CD4-positive, alpha-beta T cell (primary cell): ENCODE measurements at regions of chr1 and their contacts with region 1.

Region 1: GRCh38 chr1:209747580-209748262 is 8.1 kb upstream of the TRAF3IP3 start:
- DNase-seq: peak; percentile 69 to 93 (median 78)
- ATAC-seq: peak; percentile 79
- H3K4me3 ChIP-seq: peak overlapping the region; percentile 58
- H3K4me3 Mint-ChIP-seq: peak overlapping the region; percentile 91
- H3K27ac ChIP-seq: peak overlapping the region; percentile 66
- H3K27ac Mint-ChIP-seq: peak overlapping the region; percentile 89
- H3K4me1 ChIP-seq: peaks cover 47% of the 10 kb centered on the region
- H3K4me1 Mint-ChIP-seq: peaks cover 56% of the 10 kb centered on the region
- H3K27me3 ChIP-seq: no peaks in the 10 kb centered on the region
- H3K27me3 Mint-ChIP-seq: no peaks in the 10 kb centered on the region
- CTCF ChIP-seq: peak; percentile 99

Region 2: DNA sequence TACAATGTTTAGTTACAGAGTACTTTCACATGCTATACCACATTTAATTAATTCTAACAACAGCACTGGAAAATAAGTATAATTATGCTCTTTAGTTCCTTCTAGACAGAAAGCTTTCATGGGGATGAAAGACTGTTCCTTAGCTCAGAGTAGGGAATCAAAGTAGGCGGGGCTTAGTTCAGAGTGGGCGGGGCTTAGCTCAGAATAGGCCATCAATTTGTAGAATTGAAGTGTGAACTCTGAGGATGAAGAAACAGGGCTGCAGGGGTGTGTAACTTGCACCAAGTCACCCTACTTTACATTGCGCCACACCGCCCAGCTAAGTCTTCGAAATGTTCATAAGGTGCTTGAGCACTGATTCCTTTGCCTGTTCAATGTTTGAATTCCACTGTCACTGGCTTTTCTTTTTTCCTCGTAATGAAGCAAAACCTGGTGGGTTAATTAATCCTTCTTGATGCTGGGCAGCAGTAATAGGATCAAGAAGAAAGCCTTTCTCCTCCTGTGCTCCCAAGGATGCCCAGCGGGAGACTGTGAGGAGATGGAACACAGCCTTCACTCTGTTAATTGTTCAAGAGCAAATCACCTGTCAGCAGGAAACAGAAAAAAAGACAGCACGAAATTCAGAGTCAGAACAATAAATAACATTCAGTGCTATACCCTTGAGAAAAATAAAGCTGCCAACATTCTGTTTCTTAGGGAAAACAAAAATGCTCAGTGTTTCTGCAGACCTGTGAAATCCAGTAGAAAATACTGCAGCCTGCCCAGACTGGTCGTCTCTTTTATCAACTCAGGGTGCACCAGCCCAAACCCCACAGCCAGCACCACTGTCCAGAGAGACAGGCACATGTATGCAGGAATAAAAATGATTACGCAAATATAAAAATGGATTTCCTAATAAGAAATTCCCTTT is 230.7 kb before region 1 on chr1:
- CTCF ChIA-PET with region 1: no interaction called
- POLR2A ChIA-PET with region 1: no interaction called
- intact Hi-C with region 1: no loop called
- DNase-seq: no peak
- ATAC-seq: no peak
- H3K4me3 ChIP-seq: no peak overlapping the region
- H3K4me3 Mint-ChIP-seq: no peak overlapping the region
- H3K27ac ChIP-seq: no peak overlapping the region
- H3K27ac Mint-ChIP-seq: no peak overlapping the region
- H3K4me1 ChIP-seq: no peaks in the 10 kb centered on the region
- H3K4me1 Mint-ChIP-seq: no peaks in the 10 kb centered on the region
- H3K27me3 ChIP-seq: peaks cover 4 to 9% of the 10 kb centered on the region in 2 experiments
- H3K27me3 Mint-ChIP-seq: peaks cover 24% of the 10 kb centered on the region
- CTCF ChIP-seq: no peak

Region 3: GRCh38 chr1:209565759-209566678 is 181.7 kb before region 1 on chr1:
- CTCF ChIA-PET with region 1: interaction called, 8 read pairs
- POLR2A ChIA-PET with region 1: no interaction called
- intact Hi-C with region 1: loop called in 1 of 2 experiments (anchors 2 kb)
- DNase-seq: peak; percentile 49 to 84 (median 62)
- ATAC-seq: peak; percentile 89
- H3K4me3 ChIP-seq: no peak overlapping the region
- H3K4me3 Mint-ChIP-seq: no peak overlapping the region
- H3K27ac ChIP-seq: no peak overlapping the region
- H3K27ac Mint-ChIP-seq: no peak overlapping the region
- H3K4me1 ChIP-seq: peaks cover 8% of the 10 kb centered on the region
- H3K4me1 Mint-ChIP-seq: peaks cover 12% of the 10 kb centered on the region
- H3K27me3 ChIP-seq: no peaks in the 10 kb centered on the region
- H3K27me3 Mint-ChIP-seq: peaks cover 67% of the 10 kb centered on the region
- CTCF ChIP-seq: peak; percentile 74

Region 4: GRCh38 chr1:209601809-209602657 is 145.7 kb before region 1 on chr1:
- CTCF ChIA-PET with region 1: no interaction called
- POLR2A ChIA-PET with region 1: no interaction called
- intact Hi-C with region 1: loop called (anchors 1 to 2 kb)
- DNase-seq: peak in 6 of 14 experiments; percentile 7 to 67 (median 39)
- ATAC-seq: peak; percentile 81
- H3K4me3 ChIP-seq: no peak overlapping the region
- H3K4me3 Mint-ChIP-seq: no peak overlapping the region
- H3K27ac ChIP-seq: no peak overlapping the region
- H3K27ac Mint-ChIP-seq: no peak overlapping the region
- H3K4me1 ChIP-seq: no peaks in the 10 kb centered on the region
- H3K4me1 Mint-ChIP-seq: no peaks in the 10 kb centered on the region
- H3K27me3 ChIP-seq: no peaks in the 10 kb centered on the region
- H3K27me3 Mint-ChIP-seq: peaks cover 4% of the 10 kb centered on the region
- CTCF ChIP-seq: peak; percentile 47

Region 5: GRCh38 chr1:209769171-209769904 is 21.6 kb after region 1 on chr1:
- CTCF ChIA-PET with region 1: interaction called, 80 read pairs
- POLR2A ChIA-PET with region 1: interaction called, 478 read pairs
- intact Hi-C with region 1: loop called (anchors 1 to 2 kb)
- DNase-seq: peak; percentile 31 to 91 (median 76)
- ATAC-seq: peak; percentile 77
- H3K4me3 ChIP-seq: peak overlapping the region; percentile 71
- H3K4me3 Mint-ChIP-seq: no peak overlapping the region
- H3K27ac ChIP-seq: peak overlapping the region; percentile 54 to 73
- H3K27ac Mint-ChIP-seq: no peak overlapping the region
- H3K4me1 ChIP-seq: peaks cover 77% of the 10 kb centered on the region
- H3K4me1 Mint-ChIP-seq: peaks cover 50% of the 10 kb centered on the region
- H3K27me3 ChIP-seq: no peaks in the 10 kb centered on the region
- H3K27me3 Mint-ChIP-seq: no peaks in the 10 kb centered on the region
- CTCF ChIP-seq: no peak

Region 6: DNA sequence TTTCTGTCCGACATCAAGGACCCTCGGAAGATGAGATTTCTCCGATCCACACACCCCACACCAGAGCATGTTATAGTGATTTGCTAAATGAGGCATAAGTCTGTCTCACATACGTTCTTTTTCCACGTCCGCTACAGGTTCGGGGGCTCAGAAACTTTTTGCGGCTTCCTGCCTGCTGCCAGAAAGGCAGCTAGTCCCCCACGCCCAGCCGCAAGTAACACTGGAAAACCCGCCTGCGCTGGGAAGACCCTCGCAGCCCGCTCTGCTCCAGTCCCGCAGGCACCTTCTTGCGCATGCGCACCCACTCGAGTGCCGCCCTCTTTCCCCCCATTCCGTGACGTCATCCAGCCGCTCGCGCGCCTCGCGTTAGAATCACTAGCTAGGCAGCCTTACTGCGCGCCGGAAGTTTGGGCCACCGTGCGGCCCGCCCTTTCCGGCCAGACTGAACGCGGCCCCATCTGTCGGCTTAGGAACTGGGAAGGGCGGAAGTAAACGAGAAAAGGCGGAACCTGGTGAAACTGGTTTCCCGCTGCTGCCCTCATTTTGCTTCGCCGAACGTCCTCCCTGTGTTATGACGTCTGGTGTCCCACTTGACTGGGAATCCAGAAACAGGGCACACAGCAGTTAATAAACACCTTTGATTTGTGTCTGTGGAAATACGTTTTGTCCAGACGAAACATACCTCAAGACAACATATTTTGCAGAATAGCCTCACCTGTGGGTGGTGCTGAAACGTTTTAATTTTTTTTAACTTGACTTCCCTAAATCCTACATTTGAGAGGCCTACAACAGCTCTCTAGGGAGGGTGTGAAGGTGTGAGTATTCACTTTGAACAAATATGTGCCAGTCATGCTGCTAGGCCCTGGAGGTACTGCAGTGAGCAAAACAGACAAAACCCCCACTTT is 36.8 kb after region 1 on chr1 and contains the start of gene C1orf74:
- CTCF ChIA-PET with region 1: interaction called, 4 read pairs
- POLR2A ChIA-PET with region 1: interaction called, 11 read pairs
- intact Hi-C with region 1: no loop called
- DNase-seq: peak; percentile 98 to 100 (median 99)
- ATAC-seq: peak; percentile 98
- H3K4me3 ChIP-seq: peak within 1 kb of the TSS; percentile 69
- H3K4me3 Mint-ChIP-seq: peak within 1 kb of the TSS; percentile 93
- H3K27ac ChIP-seq: peak within 1 kb of the TSS; percentile 74 to 94
- H3K27ac Mint-ChIP-seq: peak within 1 kb of the TSS; percentile 97
- H3K4me1 ChIP-seq: peaks cover 24% of the 10 kb centered on the region
- H3K4me1 Mint-ChIP-seq: peaks cover 28% of the 10 kb centered on the region
- H3K27me3 ChIP-seq: no peaks in the 10 kb centered on the region
- H3K27me3 Mint-ChIP-seq: peaks cover 17% of the 10 kb centered on the region
- CTCF ChIP-seq: no peak
- total RNA-seq, gene C1orf74: 0.63 to 0.67 TPM